ENCODE measurements at regions of chr2 and their contacts with region 1.

Region 1: GRCh38 chr2:121710470-121711170 is 26.1 kb downstream of the NIFK start:
- DNase-seq: no peak
- ATAC-seq: no peak
- H3K4me3 ChIP-seq: no peak overlapping the region
- H3K27ac ChIP-seq: no peak overlapping the region
- H3K4me1 ChIP-seq: peaks cover 0 to under 1% (median 0%) of the 10 kb centered on the region in 12 donors
- H3K27me3 ChIP-seq: no peaks in the 10 kb centered on the region
- CTCF ChIP-seq: no peak
- POLR2A ChIP-seq: no peak

Region 2: DNA sequence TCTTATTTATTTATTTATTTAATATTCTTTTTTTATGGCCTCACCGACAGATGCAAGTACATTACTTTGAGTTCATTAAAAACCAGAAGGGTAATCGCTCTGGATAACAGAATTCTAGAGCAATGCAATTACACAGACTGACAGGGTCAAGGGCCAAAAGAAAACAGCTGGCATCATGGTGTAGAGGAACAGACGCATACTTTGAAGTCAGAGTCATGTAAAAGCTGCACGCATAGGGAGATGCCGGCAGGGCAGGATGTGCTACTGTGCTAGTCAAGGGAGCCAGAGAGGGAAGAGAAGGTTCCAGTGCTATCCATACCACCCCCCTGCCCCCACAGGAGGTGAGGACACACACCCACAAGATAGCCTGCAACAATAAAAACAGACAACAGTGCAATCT is 310.4 kb before region 1 on chr2:
- intact Hi-C with region 1: loop called in 5 of 10 experiments (anchors 5 to 10 kb)
- DNase-seq: no peak
- ATAC-seq: no peak
- H3K4me3 ChIP-seq: no peak overlapping the region
- H3K27ac ChIP-seq: no peak overlapping the region
- H3K4me1 ChIP-seq: no peaks in the 10 kb centered on the region
- H3K27me3 ChIP-seq: no peaks in the 10 kb centered on the region
- CTCF ChIP-seq: no peak
- POLR2A ChIP-seq: no peak

Region 3: DNA sequence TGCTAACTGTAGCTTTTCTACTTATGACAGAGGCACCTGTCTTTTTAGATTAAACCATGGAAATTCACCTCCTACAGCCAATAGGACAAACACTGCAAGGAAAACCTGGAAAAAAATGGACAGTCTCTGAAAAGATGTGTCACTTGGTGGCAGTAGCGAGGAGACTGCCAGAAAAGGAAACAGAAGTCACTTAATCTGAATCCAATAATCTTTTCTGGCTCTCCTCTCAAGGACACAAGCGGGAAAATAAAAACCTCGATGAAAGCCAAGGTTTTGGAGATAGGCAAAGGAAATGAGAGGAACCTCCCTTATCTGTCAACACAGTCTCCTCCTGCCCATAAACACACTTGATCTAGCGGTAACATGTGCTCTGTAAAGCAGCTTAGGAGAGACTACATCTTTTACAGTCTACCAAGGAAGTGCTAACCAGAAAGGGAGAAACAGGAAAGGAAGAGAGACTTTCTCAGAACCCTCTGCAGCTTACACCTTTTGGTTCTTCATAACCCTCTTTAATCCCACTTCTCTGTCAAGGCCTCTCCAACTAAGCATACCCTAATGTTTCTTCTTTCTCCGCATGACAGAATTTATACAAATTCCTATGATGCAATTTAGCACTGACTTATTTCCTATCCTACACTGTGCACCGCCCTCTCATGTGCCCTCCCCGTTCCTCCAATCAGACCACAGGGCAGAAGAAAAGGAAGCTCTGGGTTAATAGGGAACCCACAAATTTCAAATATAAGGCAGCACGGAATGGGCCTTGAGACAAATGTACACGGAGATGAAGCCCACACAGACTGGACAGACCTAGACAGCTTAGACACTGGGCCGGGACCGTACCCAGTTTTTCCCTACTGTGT is 114.2 kb before region 1 on chr2:
- intact Hi-C with region 1: loop called in 4 of 10 experiments (anchors 5 to 10 kb)
- DNase-seq: peak in 1 of 5 donors; percentile 31
- ATAC-seq: peak; percentile 50 to 81 (median 72)
- H3K4me3 ChIP-seq: peak overlapping the region in 8 of 12 donors; percentile 4 to 37 (median 25)
- H3K27ac ChIP-seq: peak overlapping the region; percentile 25 to 82 (median 58)
- H3K4me1 ChIP-seq: peaks cover 0 to 50% (median 27%) of the 10 kb centered on the region in 12 donors
- H3K27me3 ChIP-seq: no peaks in the 10 kb centered on the region
- CTCF ChIP-seq: peak; percentile 25 to 75 (median 56)
- POLR2A ChIP-seq: no peak

Region 4: DNA sequence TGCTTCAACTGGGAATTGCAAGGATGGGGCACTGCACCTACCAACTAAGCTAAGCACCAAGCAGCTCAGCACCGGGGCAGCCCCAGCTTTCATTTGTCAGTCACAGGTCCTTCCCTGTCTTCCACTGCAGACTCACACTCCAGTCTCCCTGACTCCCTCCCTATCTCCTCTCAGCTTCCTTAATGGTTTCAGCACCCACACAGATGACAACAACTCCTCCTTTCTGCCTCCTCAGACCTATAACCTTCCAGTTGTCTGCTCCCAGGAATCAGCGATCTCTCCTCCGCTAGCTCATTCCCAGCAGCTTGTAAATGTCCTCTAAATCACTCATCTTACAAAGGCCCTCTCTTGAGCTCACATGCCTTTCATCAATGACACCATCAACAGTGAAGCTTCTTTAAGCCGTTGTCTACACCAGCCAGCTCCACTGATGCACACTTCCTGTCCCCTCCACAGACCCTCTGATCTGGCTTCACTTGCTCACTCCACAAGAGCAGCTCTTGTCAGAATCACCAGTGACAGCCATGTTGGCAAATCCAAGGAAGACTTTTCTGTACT is 93.5 kb before region 1 on chr2:
- intact Hi-C with region 1: no loop called
- DNase-seq: no peak
- ATAC-seq: peak in 3 of 4 donors; percentile 33 to 49 (median 46)
- H3K4me3 ChIP-seq: no peak overlapping the region
- H3K27ac ChIP-seq: peak overlapping the region in 1 of 12 donors; percentile 24
- H3K4me1 ChIP-seq: peaks cover 0 to 63% (median 32%) of the 10 kb centered on the region in 12 donors
- H3K27me3 ChIP-seq: no peaks in the 10 kb centered on the region
- CTCF ChIP-seq: no peak
- POLR2A ChIP-seq: no peak

Region 5: DNA sequence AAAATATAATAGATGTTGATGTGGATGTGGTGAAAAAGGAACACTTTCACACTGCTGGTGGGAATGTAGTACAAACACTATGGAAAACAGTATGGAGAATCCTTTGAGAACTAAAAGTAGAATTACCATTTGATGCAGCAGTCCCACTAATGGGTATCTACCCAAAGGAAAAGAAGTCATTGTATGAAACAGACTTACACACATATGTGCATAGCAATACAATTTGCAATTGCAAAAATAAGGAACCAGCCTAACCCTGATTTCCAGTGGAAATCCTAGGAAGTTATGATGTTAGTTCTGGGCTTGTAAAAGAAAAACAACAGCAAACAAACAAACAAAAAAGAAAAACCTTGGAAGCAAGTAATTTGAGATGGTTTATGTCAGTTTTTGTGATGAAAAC is 32.8 kb before region 1 on chr2:
- intact Hi-C with region 1: no loop called
- DNase-seq: no peak
- ATAC-seq: no peak
- H3K4me3 ChIP-seq: no peak overlapping the region
- H3K27ac ChIP-seq: no peak overlapping the region
- H3K4me1 ChIP-seq: no peaks in the 10 kb centered on the region
- H3K27me3 ChIP-seq: no peaks in the 10 kb centered on the region
- CTCF ChIP-seq: no peak
- POLR2A ChIP-seq: no peak

Measured in heart left ventricle (tissue), 16 donors.